ENCODE measurements at regions of chr1 and their contacts with region 1.

Region 1: GRCh38 chr1:207754974-207755689 is 3.3 kb downstream of the CD46 start:
- DNase-seq: no peak
- H3K4me3 ChIP-seq: no peak overlapping the region
- H3K27ac ChIP-seq: peak overlapping the region; percentile 40
- H3K4me1 ChIP-seq: peaks cover 7% of the 10 kb centered on the region
- H3K27me3 ChIP-seq: no peaks in the 10 kb centered on the region
- CTCF ChIP-seq: no peak

Region 2: GRCh38 chr1:207633204-207633603 is 121.9 kb before region 1 on chr1:
- intact Hi-C with region 1: no loop called
- DNase-seq: no peak
- H3K4me3 ChIP-seq: no peak overlapping the region
- H3K27ac ChIP-seq: no peak overlapping the region
- H3K4me1 ChIP-seq: no peaks in the 10 kb centered on the region
- H3K27me3 ChIP-seq: no peaks in the 10 kb centered on the region
- CTCF ChIP-seq: no peak

Region 3: DNA sequence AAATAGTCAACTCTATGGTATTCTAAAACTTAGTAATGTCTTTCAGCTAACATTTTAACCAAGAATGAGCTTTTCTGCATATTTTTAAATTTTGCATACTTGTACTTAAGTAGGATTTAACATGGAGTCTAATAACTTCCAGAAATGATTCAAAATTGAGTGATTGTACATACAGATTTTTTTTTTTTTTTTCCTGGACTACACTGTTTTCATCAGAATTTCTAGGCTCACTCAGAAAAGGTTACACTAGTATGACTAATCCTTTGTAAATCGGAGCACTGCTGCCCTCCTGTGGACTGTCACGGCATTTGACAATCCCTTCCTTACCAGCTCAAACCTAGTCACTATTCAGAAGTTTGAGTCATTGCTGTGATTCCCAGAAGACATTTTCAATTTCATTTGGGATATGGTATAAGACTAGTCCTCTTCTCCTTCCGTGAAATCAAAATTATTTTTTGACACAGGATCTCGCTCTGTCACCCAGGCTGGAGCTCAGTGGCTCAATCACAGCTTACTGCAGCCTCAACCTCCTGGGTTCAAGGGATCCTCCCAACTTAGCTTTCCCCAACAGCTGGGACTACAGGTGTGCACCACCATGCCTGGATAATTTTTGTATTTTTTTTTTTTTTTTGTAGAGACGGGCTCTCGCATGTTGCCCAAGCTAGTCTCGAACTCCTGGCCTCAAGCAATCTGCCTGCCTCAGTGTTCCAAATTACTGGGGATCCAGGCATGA is 42.3 kb after region 1 on chr1:
- intact Hi-C with region 1: loop called (anchors 5 kb)
- DNase-seq: peak; percentile 92
- H3K4me3 ChIP-seq: no peak overlapping the region
- H3K27ac ChIP-seq: no peak overlapping the region
- H3K4me1 ChIP-seq: no peaks in the 10 kb centered on the region
- H3K27me3 ChIP-seq: no peaks in the 10 kb centered on the region
- CTCF ChIP-seq: peak; percentile 82

Region 4: GRCh38 chr1:207838156-207839082 is 83.3 kb after region 1 on chr1:
- intact Hi-C with region 1: no loop called
- DNase-seq: no peak
- H3K4me3 ChIP-seq: no peak overlapping the region
- H3K27ac ChIP-seq: no peak overlapping the region
- H3K4me1 ChIP-seq: no peaks in the 10 kb centered on the region
- H3K27me3 ChIP-seq: no peaks in the 10 kb centered on the region
- CTCF ChIP-seq: no peak

Region 5: GRCh38 chr1:207897188-207897587 is 142.1 kb after region 1 on chr1:
- intact Hi-C with region 1: no loop called
- DNase-seq: no peak
- H3K4me3 ChIP-seq: no peak overlapping the region
- H3K27ac ChIP-seq: no peak overlapping the region
- H3K4me1 ChIP-seq: no peaks in the 10 kb centered on the region
- H3K27me3 ChIP-seq: no peaks in the 10 kb centered on the region
- CTCF ChIP-seq: no peak

Measured in colonic mucosa (tissue), 4 donors.